ENCODE measurements at regions of chr14 and their contacts with region 1.

Region 1: GRCh38 chr14:64891839-64892375 is 12.2 kb upstream of the SPTB start:
- DNase-seq: peak; percentile 88
- ATAC-seq: peak; percentile 100
- H3K4me3 ChIP-seq: no peak overlapping the region
- H3K27ac ChIP-seq: no peak overlapping the region
- H3K4me1 ChIP-seq: no peaks in the 10 kb centered on the region
- H3K27me3 ChIP-seq: no peaks in the 10 kb centered on the region
- CTCF ChIP-seq: peak; percentile 85

Region 2: GRCh38 chr14:64338616-64339316 is 553.1 kb before region 1 on chr14:
- CTCF ChIA-PET with region 1: interaction called, 4 read pairs
- POLR2A ChIA-PET with region 1: no interaction called
- intact Hi-C with region 1: loop called (anchors 10 kb)
- DNase-seq: peak; percentile 98
- ATAC-seq: peak; percentile 90
- H3K4me3 ChIP-seq: peak overlapping the region; percentile 90
- H3K27ac ChIP-seq: peak overlapping the region; percentile 79
- H3K4me1 ChIP-seq: peaks cover 22% of the 10 kb centered on the region
- H3K27me3 ChIP-seq: no peaks in the 10 kb centered on the region
- CTCF ChIP-seq: no peak

Region 3: DNA sequence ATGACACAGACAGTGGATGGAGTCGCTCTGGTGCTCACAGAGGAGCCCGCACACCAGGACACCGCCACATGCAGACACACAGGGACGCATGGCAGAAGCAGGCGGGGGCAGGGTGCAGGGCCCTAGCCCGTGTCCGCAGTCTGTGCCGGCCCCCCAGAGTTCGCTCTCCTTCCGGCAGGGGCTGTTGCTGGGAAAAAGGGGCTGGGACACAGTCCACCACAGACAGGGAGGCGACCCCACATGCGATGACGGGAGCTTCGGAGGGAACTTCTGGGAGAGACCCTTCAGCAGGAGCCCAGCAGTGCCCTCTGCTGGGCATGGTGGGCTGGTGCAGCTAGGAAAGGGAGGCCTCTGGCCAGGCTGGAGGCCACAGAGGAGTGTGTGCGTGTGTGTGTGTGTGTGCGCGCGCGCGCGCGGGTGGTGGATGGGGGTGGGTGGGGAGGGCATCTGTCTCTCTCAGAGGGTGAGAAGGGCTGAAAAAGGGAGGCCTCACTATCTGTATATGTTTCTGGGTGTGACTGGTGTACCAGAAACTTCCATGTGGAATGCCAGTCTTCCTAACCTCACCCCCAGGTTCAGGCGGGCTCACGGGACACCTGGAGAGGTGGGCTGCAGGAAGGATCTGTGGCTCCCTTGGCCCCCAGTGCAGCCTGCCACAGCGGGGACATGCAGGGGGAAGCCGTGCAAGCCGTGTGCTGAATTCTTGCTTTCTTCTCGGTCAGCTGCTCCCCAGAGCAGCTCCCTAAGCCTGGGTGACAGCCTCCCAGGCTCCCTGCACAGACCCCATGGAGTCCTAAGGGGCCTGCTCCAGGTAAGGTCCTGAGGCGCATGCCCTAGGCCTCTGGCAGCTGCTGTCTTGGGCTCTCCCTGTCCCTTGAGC is 127.0 kb before region 1 on chr14:
- CTCF ChIA-PET with region 1: interaction called, 8 read pairs
- POLR2A ChIA-PET with region 1: no interaction called
- intact Hi-C with region 1: loop called (anchors 5 kb)
- DNase-seq: peak; percentile 92
- ATAC-seq: peak; percentile 48
- H3K4me3 ChIP-seq: peak overlapping the region; percentile 31; the same call in 1 of the 2 replicates
- H3K27ac ChIP-seq: no peak overlapping the region
- H3K4me1 ChIP-seq: peaks cover 49% of the 10 kb centered on the region
- H3K27me3 ChIP-seq: no peaks in the 10 kb centered on the region
- CTCF ChIP-seq: peak; percentile 86

Region 4: GRCh38 chr14:64800000-64800399 is 91.9 kb before region 1 on chr14:
- CTCF ChIA-PET with region 1: interaction called, 42 read pairs
- POLR2A ChIA-PET with region 1: no interaction called
- intact Hi-C with region 1: loop called (anchors 5 kb)
- DNase-seq: peak; percentile 69
- ATAC-seq: peak; percentile 55
- H3K4me3 ChIP-seq: no peak overlapping the region
- H3K27ac ChIP-seq: no peak overlapping the region
- H3K4me1 ChIP-seq: peaks cover 10% of the 10 kb centered on the region
- H3K27me3 ChIP-seq: no peaks in the 10 kb centered on the region
- CTCF ChIP-seq: peak; percentile 91

Region 5: DNA sequence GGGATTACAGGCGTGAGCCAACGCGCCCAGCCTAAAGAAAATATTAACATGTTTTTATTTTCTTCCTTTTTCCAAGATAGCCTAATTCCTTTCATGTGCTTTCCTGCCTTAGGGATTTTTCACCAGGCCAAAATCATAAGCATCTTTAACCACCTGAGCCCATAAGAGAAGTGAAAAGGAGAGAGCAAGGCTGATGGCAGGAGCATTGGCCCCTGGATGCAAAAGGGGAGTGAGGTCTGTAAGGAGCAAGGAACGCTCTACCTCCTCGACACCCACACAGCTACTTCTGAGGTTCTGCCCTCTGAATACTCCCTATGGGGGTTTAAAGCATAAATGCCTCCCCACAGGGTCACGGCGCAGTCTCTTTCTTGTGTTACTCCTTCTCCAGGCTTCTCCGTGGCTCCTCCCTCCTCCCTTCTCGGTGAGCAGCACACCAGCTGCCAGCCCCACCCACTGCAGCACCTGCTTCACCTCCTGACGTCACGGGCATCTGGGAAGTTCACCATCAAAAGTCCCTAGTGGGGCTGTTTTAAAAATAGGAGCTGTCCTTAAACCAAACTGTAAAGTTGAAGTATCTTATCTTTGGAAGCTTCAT is 79.6 kb before region 1 on chr14:
- CTCF ChIA-PET with region 1: no interaction called
- POLR2A ChIA-PET with region 1: no interaction called
- intact Hi-C with region 1: no loop called
- DNase-seq: no peak
- ATAC-seq: no peak
- H3K4me3 ChIP-seq: no peak overlapping the region
- H3K27ac ChIP-seq: no peak overlapping the region
- H3K4me1 ChIP-seq: peaks cover 13% of the 10 kb centered on the region
- H3K27me3 ChIP-seq: no peaks in the 10 kb centered on the region
- CTCF ChIP-seq: no peak

Region 6: GRCh38 chr14:64880221-64881121 is 11.4 kb before region 1 on chr14:
- CTCF ChIA-PET with region 1: interaction called, 12 read pairs
- POLR2A ChIA-PET with region 1: no interaction called
- intact Hi-C with region 1: no loop called
- DNase-seq: peak; percentile 56
- ATAC-seq: peak; percentile 89
- H3K4me3 ChIP-seq: peak overlapping the region; percentile 69
- H3K27ac ChIP-seq: no peak overlapping the region
- H3K4me1 ChIP-seq: peaks cover 8% of the 10 kb centered on the region; the same call in 1 of the 2 replicates
- H3K27me3 ChIP-seq: peaks cover 51% of the 10 kb centered on the region
- CTCF ChIP-seq: no peak

Region 7: DNA sequence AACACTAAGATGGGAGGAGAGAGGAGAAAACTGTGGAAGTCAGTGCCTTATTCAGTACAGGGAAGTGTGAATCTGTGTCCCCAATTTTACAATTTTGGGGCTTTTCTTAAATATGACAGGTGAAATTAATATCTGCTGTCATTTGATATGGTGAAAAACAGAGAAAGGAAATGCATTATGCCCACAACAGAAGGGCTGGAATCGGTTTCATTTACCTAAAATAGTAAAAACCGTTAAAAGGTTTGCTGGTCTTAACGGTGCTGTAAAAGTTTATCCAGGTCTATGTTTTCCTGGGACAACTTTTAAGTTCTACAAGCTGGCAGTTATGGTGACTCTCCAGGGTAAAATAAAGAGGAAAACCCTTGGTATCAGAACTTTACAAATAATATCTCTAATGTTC is 831.4 kb after region 1 on chr14:
- CTCF ChIA-PET with region 1: no interaction called
- POLR2A ChIA-PET with region 1: no interaction called
- intact Hi-C with region 1: no loop called
- DNase-seq: no peak
- ATAC-seq: no peak
- H3K4me3 ChIP-seq: no peak overlapping the region
- H3K27ac ChIP-seq: no peak overlapping the region
- H3K4me1 ChIP-seq: no peaks in the 10 kb centered on the region
- H3K27me3 ChIP-seq: no peaks in the 10 kb centered on the region
- CTCF ChIP-seq: no peak

Measured in PC-3 (cell line).